PC-9 (cell line): ENCODE measurements at regions of chr19 and their contacts with region 1.

Region 1: DNA sequence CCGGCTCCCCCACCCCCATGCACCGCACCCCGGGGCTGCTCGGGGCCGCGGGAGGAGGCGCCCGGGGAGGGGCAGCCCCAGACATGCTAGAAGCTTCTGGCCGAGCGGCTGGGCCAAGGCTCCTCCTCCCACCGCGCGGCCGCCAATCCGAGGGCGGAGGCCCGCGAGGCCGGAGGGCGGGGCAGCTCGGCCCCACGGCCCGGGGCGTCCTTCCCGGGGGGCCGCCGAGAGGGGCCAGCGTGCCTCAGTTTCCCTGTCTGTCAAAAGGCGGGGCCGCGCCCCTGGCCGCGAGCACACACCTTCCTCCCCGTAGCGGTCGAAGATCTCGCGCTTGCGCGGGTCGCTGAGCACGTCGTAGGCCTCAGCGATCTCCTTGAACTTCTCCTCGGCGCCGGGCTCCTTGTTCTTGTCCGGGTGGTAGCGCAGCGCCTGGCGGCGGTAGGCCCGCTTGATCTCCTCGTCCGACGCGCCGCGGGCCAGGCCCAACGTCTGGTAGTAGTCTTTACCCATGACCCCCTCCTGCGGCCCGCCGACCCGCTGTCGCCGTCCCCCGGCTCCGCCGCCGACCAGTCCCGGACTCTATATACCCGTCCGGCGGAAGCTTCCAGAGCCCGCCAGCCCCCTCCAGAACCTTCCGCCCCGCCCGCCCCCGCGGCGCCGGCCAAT is at the start of gene DNAJB1:
- DNase-seq: peak in 1 of 2 experiments; percentile 80
- H3K4me3 ChIP-seq: peak within 1 kb of the TSS; percentile 99
- H3K27ac ChIP-seq: peak within 1 kb of the TSS; percentile 94
- H3K4me1 ChIP-seq: peaks cover 46% of the 10 kb centered on the region
- H3K27me3 ChIP-seq: no peaks in the 10 kb centered on the region
- CTCF ChIP-seq: no peak
- total RNA-seq, gene DNAJB1: 159 and 199 TPM in 2 replicates

Region 2: GRCh38 chr19:13872695-13873389 is 645.1 kb before region 1 on chr19:
- CTCF ChIA-PET with region 1: no interaction called
- POLR2A ChIA-PET with region 1: interaction called, 20 read pairs
- intact Hi-C with region 1: no loop called
- DNase-seq: peak; percentile 59 to 61
- H3K4me3 ChIP-seq: peak overlapping the region; percentile 65
- H3K27ac ChIP-seq: no peak overlapping the region
- H3K4me1 ChIP-seq: peaks cover 9% of the 10 kb centered on the region; the same call in 1 of the 2 replicates
- H3K27me3 ChIP-seq: no peaks in the 10 kb centered on the region
- CTCF ChIP-seq: peak; percentile 69; the same call in 1 of the 2 replicates

Region 3: GRCh38 chr19:14203177-14203576 is 314.8 kb before region 1 on chr19:
- CTCF ChIA-PET with region 1: no interaction called
- POLR2A ChIA-PET with region 1: no interaction called
- intact Hi-C with region 1: no loop called
- DNase-seq: no peak
- H3K4me3 ChIP-seq: no peak overlapping the region
- H3K27ac ChIP-seq: no peak overlapping the region
- H3K4me1 ChIP-seq: no peaks in the 10 kb centered on the region
- H3K27me3 ChIP-seq: no peaks in the 10 kb centered on the region; the same call in 1 of the 2 replicates
- CTCF ChIP-seq: no peak

Region 4: DNA sequence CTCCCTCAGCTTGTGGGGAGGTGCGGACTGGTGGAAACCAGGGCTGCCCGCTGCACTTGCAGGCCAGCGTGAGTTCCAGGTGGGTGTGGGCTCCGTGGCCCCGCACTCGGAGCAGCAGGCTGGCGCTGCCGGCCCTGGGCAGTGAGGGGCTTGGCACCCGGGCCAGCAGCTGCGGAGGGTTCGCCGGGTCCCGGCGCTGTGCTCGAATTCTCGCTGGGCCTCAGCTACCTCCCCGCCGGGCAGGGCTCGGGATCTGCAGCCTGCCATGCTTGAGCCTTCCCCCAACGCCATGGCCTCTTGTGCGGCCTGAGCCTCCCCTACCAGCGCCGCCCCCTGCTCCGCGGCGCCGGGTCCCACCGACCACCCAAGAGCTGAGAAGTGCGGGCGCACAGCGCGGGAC is 240.4 kb before region 1 on chr19:
- CTCF ChIA-PET with region 1: no interaction called
- POLR2A ChIA-PET with region 1: no interaction called
- intact Hi-C with region 1: no loop called
- DNase-seq: no peak
- H3K4me3 ChIP-seq: no peak overlapping the region
- H3K27ac ChIP-seq: no peak overlapping the region
- H3K4me1 ChIP-seq: no peaks in the 10 kb centered on the region
- H3K27me3 ChIP-seq: peaks cover 41% of the 10 kb centered on the region
- CTCF ChIP-seq: no peak

Region 5: DNA sequence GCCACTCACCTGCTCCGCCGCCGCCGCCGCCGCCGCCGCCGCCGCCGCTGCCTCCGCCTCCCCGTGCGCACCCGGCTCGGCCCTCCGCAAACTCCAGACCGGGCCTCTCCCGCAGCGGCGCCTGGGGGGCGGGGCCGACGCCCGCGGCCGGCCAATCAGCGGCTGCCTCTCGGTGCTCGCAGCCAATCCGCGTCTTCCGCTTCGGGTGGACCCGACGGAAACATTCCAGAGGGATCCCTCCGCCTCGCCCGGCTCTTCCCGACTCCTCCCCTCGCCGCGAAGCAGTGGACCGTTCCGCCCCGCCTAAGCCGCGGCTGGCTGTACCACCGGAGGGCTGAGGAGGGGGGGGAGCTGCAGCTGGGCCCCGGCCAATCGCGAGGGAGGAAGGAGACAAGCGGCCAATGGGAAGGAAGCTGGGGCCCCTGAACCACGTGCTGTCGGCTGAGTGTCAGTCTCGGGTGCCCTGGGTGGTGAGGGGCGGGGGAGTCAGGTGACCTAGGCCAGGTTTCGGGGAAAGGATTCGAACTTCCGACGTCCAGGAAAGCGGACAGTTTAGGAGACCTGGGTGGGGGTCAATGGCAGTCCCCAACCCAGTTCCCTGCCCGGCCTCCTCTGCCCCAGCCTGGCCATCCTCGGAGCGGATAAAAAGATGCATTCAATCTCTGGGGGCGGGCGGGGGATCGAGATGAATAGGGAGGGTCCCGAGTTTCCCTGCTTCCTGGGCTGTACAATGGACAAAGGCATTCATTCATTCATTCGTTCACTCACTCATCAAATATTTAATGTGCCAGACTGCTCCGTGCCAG is 21.7 kb before region 1 on chr19 and contains the start of gene GIPC1:
- CTCF ChIA-PET with region 1: interaction called, 13 read pairs
- POLR2A ChIA-PET with region 1: interaction called, 11 read pairs
- intact Hi-C with region 1: loop called (anchors 1 kb)
- DNase-seq: peak; percentile 95 to 98
- H3K4me3 ChIP-seq: peak within 1 kb of the TSS; percentile 99
- H3K27ac ChIP-seq: peak within 1 kb of the TSS; percentile 91
- H3K4me1 ChIP-seq: peaks cover 34% of the 10 kb centered on the region
- H3K27me3 ChIP-seq: no peaks in the 10 kb centered on the region
- CTCF ChIP-seq: no peak
- total RNA-seq, gene GIPC1: 205 and 259 TPM in 2 replicates

Region 6: DNA sequence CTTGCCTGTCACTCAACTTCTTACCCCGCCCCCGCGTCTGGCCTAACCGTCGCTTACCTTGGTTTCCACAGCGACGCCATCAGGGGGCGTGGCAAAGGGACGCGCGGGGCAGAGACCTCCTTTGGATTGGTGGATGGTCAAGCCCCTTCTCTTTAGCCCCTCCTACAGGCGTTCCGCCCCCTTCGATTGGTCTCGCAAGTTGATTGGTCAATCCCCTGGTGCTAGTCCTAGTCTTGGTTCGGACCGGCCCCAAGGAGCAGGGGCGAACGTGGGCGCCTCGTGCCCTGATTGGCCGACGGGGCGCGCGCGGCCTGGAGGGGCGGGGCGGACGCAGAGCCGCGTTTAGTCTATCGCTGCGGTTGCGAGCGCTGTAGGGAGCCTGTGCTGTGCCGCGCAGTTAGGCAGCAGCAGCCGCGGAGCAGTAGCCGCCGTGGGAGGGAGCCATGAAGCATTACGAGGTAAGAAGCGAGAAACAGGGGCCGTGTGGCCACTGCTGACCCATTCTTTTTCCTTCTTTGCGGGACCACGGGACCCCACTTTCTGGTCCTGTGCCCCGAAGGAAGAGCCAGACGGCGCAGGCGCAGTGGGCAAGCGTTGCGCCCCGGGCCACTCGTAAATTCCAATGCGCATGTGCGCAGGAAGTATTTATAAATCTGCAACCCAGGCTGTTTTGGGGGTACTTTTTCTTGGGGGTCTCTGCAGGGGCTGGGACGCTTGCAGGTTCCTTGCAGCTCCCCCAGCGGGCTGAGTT is 11.5 kb after region 1 on chr19 and contains the start of gene TECR:
- CTCF ChIA-PET with region 1: no interaction called
- POLR2A ChIA-PET with region 1: interaction called, 17 read pairs
- intact Hi-C with region 1: no loop called
- DNase-seq: peak; percentile 99 to 100
- H3K4me3 ChIP-seq: peak within 1 kb of the TSS; percentile 76
- H3K27ac ChIP-seq: peak within 1 kb of the TSS; percentile 24
- H3K4me1 ChIP-seq: peaks cover 12% of the 10 kb centered on the region
- H3K27me3 ChIP-seq: no peaks in the 10 kb centered on the region
- CTCF ChIP-seq: no peak
- total RNA-seq, gene TECR: 212 and 294 TPM in 2 replicates

Region 7: DNA sequence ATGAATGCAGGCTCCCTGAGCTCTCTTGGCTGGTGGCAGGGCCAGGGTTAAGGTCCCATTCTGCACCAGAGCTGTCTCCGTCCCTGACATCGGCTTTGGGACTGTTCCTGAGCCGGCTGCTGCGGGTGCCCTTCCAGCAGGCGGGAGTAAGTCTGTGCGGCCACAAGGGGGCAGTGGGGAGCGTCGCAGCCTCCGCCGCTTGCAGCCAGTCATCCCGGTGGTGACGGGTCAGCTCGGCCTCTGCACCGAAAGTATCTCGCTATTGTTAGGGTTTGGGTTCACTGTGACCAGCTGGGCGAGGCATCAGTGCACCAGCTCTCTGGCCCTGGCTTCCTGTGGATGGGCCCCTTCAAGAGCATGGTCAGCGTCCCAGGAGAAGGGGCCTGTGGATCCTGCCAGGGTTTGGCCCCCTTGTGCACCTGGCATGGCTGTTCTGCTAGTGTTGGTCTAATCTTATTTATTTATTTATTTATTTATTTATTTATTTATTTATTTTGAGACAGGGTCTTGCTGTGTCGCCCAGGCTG is 38.8 kb after region 1 on chr19:
- CTCF ChIA-PET with region 1: no interaction called
- POLR2A ChIA-PET with region 1: interaction called, 6 read pairs
- intact Hi-C with region 1: loop called (anchors 1 kb)
- DNase-seq: peak; percentile 59 to 77
- H3K4me3 ChIP-seq: no peak overlapping the region
- H3K27ac ChIP-seq: 0 out of 2 replicates have a peak overlapping the region, but pooled peaks have one; percentile 1
- H3K4me1 ChIP-seq: 0 out of 2 replicates have a peak, but pooled peaks cover 6% of the 10 kb centered on the region
- H3K27me3 ChIP-seq: no peaks in the 10 kb centered on the region
- CTCF ChIP-seq: peak; percentile 97